ENCODE measurements at regions of chr5 and their contacts with region 1.

Region 1: GRCh38 chr5:141811287-141812155 is 66.7 kb downstream of the PCDH1 start:
- DNase-seq: peak; percentile 86
- H3K4me3 ChIP-seq: peak overlapping the region in 1 of 2 experiments; percentile 24; a peak in 2 of 4 replicates
- H3K27ac ChIP-seq: no peak overlapping the region
- H3K4me1 ChIP-seq: peaks cover 0 to 16% of the 10 kb centered on the region in 2 experiments; a peak in 1 of 4 replicates
- H3K27me3 ChIP-seq: peaks cover 19% of the 10 kb centered on the region
- CTCF ChIP-seq: peak; percentile 75
- EP300 ChIP-seq: no peak
- RAD21 ChIP-seq: peak; percentile 52; the same call in 1 of the 2 replicates

Region 2: GRCh38 chr5:141412854-141413539 is 398.5 kb before region 1 on chr5 and contains the start of gene PCDHGA10:
- CTCF ChIA-PET with region 1: no interaction called
- POLR2A ChIA-PET with region 1: no interaction called
- DNase-seq: no peak
- H3K4me3 ChIP-seq: peak within 1 kb of the TSS; percentile 22 to 28; a peak in 3 of 4 replicates
- H3K27ac ChIP-seq: no peak within 1 kb of the TSS
- H3K4me1 ChIP-seq: no peaks in the 10 kb centered on the region
- H3K27me3 ChIP-seq: no peaks in the 10 kb centered on the region
- CTCF ChIP-seq: peak; percentile 54
- EP300 ChIP-seq: no peak
- RAD21 ChIP-seq: peak; percentile 47
- polyA plus RNA-seq, gene PCDHGA10: 1.6 and 2.0 TPM in 2 replicates

Region 3: GRCh38 chr5:141475625-141476131 is 335.8 kb before region 1 on chr5 and contains the start of gene PCDHGC3:
- CTCF ChIA-PET with region 1: no interaction called
- POLR2A ChIA-PET with region 1: no interaction called
- DNase-seq: peak; percentile 90
- H3K4me3 ChIP-seq: peak within 1 kb of the TSS; percentile 82 to 85
- H3K27ac ChIP-seq: peak within 1 kb of the TSS; percentile 92 to 94
- H3K4me1 ChIP-seq: peaks cover 6 to 34% of the 10 kb centered on the region in 2 experiments; a peak in 3 of 4 replicates
- H3K27me3 ChIP-seq: no peaks in the 10 kb centered on the region
- CTCF ChIP-seq: peak; percentile 45
- EP300 ChIP-seq: peak in 1 of 2 experiments; percentile 38; a peak in 1 of 4 replicates
- RAD21 ChIP-seq: peak; percentile 85
- polyA plus RNA-seq, gene PCDHGC3: 55.8 and 97.0 TPM in 2 replicates

Region 4: GRCh38 chr5:141709699-141710267 is 101.7 kb before region 1 on chr5:
- CTCF ChIA-PET with region 1: interaction called, 447 read pairs
- POLR2A ChIA-PET with region 1: no interaction called
- DNase-seq: no peak
- H3K4me3 ChIP-seq: no peak overlapping the region
- H3K27ac ChIP-seq: no peak overlapping the region
- H3K4me1 ChIP-seq: peaks cover 0 to 10% of the 10 kb centered on the region in 2 experiments; a peak in 1 of 4 replicates
- H3K27me3 ChIP-seq: peaks cover 17% of the 10 kb centered on the region; the same call in 1 of the 2 replicates
- CTCF ChIP-seq: no peak
- EP300 ChIP-seq: no peak
- RAD21 ChIP-seq: no peak

Region 5: DNA sequence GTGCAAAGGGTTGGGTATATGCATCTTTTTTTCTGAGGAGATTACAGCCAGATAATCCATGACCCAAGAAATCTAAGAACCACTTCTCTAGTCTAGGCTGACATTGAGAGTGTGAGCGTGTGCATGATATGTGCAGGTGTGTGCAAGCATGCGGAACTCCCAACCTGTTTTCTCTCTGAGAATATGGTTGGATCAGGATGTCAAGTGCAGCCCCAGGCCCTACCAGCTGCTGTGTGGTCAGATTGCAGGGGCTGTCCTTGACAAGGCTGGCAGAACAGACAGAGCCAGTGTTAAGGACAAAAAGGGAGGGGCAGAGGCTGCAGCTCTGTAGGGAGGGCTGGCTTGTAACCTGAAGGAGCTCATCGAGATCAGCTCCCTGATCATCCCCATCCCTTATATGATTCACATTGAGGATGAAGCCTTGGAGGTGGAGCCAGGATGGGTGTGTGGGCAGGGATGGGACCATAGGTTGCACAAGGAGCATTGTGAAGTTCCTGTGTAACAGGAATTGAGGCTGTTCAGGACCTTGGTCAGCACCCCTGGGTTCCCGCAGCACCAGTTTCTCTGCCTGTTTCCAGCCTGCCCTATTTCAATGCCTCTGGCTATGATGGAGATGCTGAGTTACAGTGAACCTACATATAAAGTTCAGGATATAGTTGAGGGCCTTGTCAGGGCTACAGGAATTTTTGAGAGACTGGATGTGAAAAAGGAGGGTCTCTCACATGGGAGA is 76.9 kb before region 1 on chr5:
- CTCF ChIA-PET with region 1: interaction called, 36 read pairs
- POLR2A ChIA-PET with region 1: interaction called, 3 read pairs
- DNase-seq: peak; percentile 41
- H3K4me3 ChIP-seq: no peak overlapping the region
- H3K27ac ChIP-seq: no peak overlapping the region
- H3K4me1 ChIP-seq: peaks cover 0 to 67% of the 10 kb centered on the region in 2 experiments; a peak in 2 of 4 replicates
- H3K27me3 ChIP-seq: peaks cover 10% of the 10 kb centered on the region
- CTCF ChIP-seq: no peak
- EP300 ChIP-seq: no peak
- RAD21 ChIP-seq: no peak; the same call in 1 of the 2 replicates

Region 6: DNA sequence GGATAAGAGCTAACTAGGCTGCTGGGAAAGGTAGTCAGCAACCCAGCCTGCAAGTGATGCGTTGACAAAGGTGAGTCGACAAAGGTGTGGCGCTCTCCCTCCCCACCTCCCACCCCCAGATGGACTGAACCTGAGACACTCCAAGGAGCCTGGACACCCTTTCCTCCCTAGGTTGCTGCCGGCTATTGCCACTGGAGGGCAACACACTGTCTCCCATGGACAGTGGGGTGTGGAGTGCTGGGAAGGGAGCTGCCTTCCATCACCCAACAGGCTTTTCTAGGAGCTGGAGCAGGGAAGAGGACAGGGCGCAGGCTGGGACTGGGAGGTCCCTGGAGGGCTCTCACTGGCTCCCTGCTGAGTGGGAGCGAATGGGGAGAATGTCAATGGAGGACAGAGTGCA is 54.1 kb before region 1 on chr5:
- CTCF ChIA-PET with region 1: interaction called, 18 read pairs
- POLR2A ChIA-PET with region 1: no interaction called
- DNase-seq: peak; percentile 80
- H3K4me3 ChIP-seq: no peak overlapping the region; a peak in 1 of 4 replicates
- H3K27ac ChIP-seq: no peak overlapping the region
- H3K4me1 ChIP-seq: peaks cover 0 to 27% of the 10 kb centered on the region in 2 experiments; a peak in 1 of 4 replicates
- H3K27me3 ChIP-seq: peaks cover under 1% of the 10 kb centered on the region
- CTCF ChIP-seq: peak; percentile 50
- EP300 ChIP-seq: no peak
- RAD21 ChIP-seq: peak; percentile 70

Region 7: GRCh38 chr5:141825791-141826560 is 14.5 kb after region 1 on chr5:
- CTCF ChIA-PET with region 1: interaction called, 137 read pairs
- POLR2A ChIA-PET with region 1: interaction called, 5 read pairs
- DNase-seq: peak; percentile 64
- H3K4me3 ChIP-seq: no peak overlapping the region; a peak in 1 of 4 replicates
- H3K27ac ChIP-seq: peak overlapping the region in 1 of 2 experiments; percentile 66; a peak in 2 of 4 replicates
- H3K4me1 ChIP-seq: peaks cover 8 to 42% of the 10 kb centered on the region in 2 experiments; a peak in 2 of 4 replicates
- H3K27me3 ChIP-seq: peaks cover 7% of the 10 kb centered on the region
- CTCF ChIP-seq: peak; percentile 55
- EP300 ChIP-seq: no peak
- RAD21 ChIP-seq: peak; percentile 44

Region 8: DNA sequence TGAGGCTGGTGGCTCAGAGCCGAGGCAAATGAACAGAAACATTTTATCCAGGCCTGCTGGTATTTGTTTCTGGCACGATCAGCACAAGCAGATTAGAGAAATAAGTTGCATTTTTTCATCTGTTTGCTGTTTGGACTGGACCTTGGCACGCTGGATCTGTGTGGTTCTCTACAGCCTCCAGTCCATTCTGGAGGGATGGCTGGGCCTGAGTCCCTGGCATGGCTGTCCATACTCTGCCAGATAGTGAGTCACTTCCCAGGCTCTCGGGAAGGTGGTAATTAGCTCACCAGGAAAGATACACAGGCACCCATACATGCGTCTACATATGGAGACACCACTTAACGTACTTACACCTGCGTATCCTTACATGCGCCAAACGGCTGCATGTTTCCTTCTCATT is 434.7 kb after region 1 on chr5:
- CTCF ChIA-PET with region 1: no interaction called
- POLR2A ChIA-PET with region 1: no interaction called
- DNase-seq: no peak
- H3K4me3 ChIP-seq: no peak overlapping the region
- H3K27ac ChIP-seq: peak overlapping the region; percentile 5 to 40; a peak in 3 of 4 replicates
- H3K4me1 ChIP-seq: peaks cover 5 to 16% of the 10 kb centered on the region in 2 experiments; a peak in 1 of 4 replicates
- H3K27me3 ChIP-seq: no peaks in the 10 kb centered on the region
- CTCF ChIP-seq: no peak
- EP300 ChIP-seq: no peak
- RAD21 ChIP-seq: no peak